CD8-positive, alpha-beta T cell (primary cell): ENCODE measurements at regions of chr1 and their contacts with region 1.

Region 1: GRCh38 chr1:7902478-7903085 is 38.1 kb downstream of the TNFRSF9 start:
- DNase-seq: peak in 8 of 9 experiments; percentile 31 to 84 (median 60)
- ATAC-seq: peak; percentile 69
- H3K4me3 ChIP-seq: peak overlapping the region; percentile 39 to 46
- H3K4me3 Mint-ChIP-seq: peak overlapping the region; percentile 65
- H3K27ac ChIP-seq: no peak overlapping the region
- H3K27ac Mint-ChIP-seq: no peak overlapping the region
- H3K4me1 ChIP-seq: peaks cover 4% of the 10 kb centered on the region
- H3K4me1 Mint-ChIP-seq: peaks cover 9% of the 10 kb centered on the region
- H3K27me3 ChIP-seq: no peaks in the 10 kb centered on the region
- H3K27me3 Mint-ChIP-seq: no peaks in the 10 kb centered on the region
- CTCF ChIP-seq: peak; percentile 53

Region 2: GRCh38 chr1:7808253-7808844 is 94.2 kb before region 1 on chr1:
- CTCF ChIA-PET with region 1: interaction called, 6 read pairs
- POLR2A ChIA-PET with region 1: no interaction called
- intact Hi-C with region 1: loop called (anchors 1 to 2 kb)
- DNase-seq: peak in 2 of 9 experiments; percentile 43 to 63
- ATAC-seq: peak; percentile 62
- H3K4me3 ChIP-seq: no peak overlapping the region
- H3K4me3 Mint-ChIP-seq: no peak overlapping the region
- H3K27ac ChIP-seq: no peak overlapping the region
- H3K27ac Mint-ChIP-seq: no peak overlapping the region
- H3K4me1 ChIP-seq: no peaks in the 10 kb centered on the region
- H3K4me1 Mint-ChIP-seq: no peaks in the 10 kb centered on the region
- H3K27me3 ChIP-seq: no peaks in the 10 kb centered on the region
- H3K27me3 Mint-ChIP-seq: no peaks in the 10 kb centered on the region
- CTCF ChIP-seq: peak; percentile 37

Region 3: DNA sequence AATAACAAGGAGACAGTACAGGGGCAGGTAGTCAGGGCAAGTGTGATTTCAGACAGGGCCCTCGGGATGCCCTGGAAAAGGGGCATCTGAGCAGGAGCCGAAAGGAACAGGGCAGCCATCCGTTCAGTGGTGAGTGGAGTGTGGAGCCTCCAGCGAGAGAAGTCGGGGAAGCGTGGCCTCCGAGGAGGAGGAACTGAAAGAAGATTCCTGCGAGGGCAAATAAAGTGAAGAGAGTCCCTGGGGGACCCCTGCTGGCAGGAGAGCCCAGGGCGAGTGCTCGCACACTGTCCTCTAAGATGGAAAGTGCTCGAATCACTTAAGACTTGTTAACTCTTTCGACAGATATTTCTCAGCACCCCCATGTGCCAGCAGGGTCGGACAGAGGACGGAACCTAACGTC is 46.2 kb before region 1 on chr1:
- CTCF ChIA-PET with region 1: no interaction called
- POLR2A ChIA-PET with region 1: no interaction called
- intact Hi-C with region 1: no loop called
- DNase-seq: peak in 2 of 9 experiments; percentile 6 to 12
- ATAC-seq: no peak
- H3K4me3 ChIP-seq: no peak overlapping the region
- H3K4me3 Mint-ChIP-seq: no peak overlapping the region
- H3K27ac ChIP-seq: no peak overlapping the region
- H3K27ac Mint-ChIP-seq: no peak overlapping the region
- H3K4me1 ChIP-seq: no peaks in the 10 kb centered on the region
- H3K4me1 Mint-ChIP-seq: peaks cover 3% of the 10 kb centered on the region
- H3K27me3 ChIP-seq: no peaks in the 10 kb centered on the region
- H3K27me3 Mint-ChIP-seq: peaks cover 8% of the 10 kb centered on the region
- CTCF ChIP-seq: no peak

Region 4: GRCh38 chr1:7942214-7942921 is 39.8 kb after region 1 on chr1:
- CTCF ChIA-PET with region 1: interaction called, 4 read pairs
- POLR2A ChIA-PET with region 1: no interaction called
- intact Hi-C with region 1: loop called (anchors 5 kb)
- DNase-seq: peak in 7 of 9 experiments; percentile 26 to 77 (median 49)
- ATAC-seq: peak; percentile 59
- H3K4me3 ChIP-seq: peak overlapping the region; percentile 45 to 48
- H3K4me3 Mint-ChIP-seq: peak overlapping the region; percentile 81
- H3K27ac ChIP-seq: peak overlapping the region in 1 of 2 experiments; percentile 60
- H3K27ac Mint-ChIP-seq: peak overlapping the region; percentile 50
- H3K4me1 ChIP-seq: peaks cover 21% of the 10 kb centered on the region
- H3K4me1 Mint-ChIP-seq: peaks cover 39% of the 10 kb centered on the region
- H3K27me3 ChIP-seq: peaks cover 3 to 6% of the 10 kb centered on the region in 2 experiments
- H3K27me3 Mint-ChIP-seq: peaks cover 15% of the 10 kb centered on the region
- CTCF ChIP-seq: no peak